ENCODE measurements at regions of chr3 and their contacts with region 1.

Region 1: GRCh38 chr3:188052169-188053030 is 101.6 kb upstream of the LPP start:
- DNase-seq: peak; percentile 98
- H3K4me3 ChIP-seq: no peak overlapping the region
- H3K27ac ChIP-seq: peak overlapping the region; percentile 84 to 89
- H3K4me1 ChIP-seq: peaks cover 36% of the 10 kb centered on the region
- H3K27me3 ChIP-seq: no peaks in the 10 kb centered on the region
- CTCF ChIP-seq: peak; percentile 53 to 83 (median 80)
- POLR2A ChIP-seq: no peak

Region 2: GRCh38 chr3:188954590-188955208 is 902.3 kb after region 1 on chr3:
- intact Hi-C with region 1: loop called (anchors 5 kb)
- DNase-seq: peak; percentile 87
- H3K4me3 ChIP-seq: no peak overlapping the region
- H3K27ac ChIP-seq: peak overlapping the region in 1 of 2 donors; percentile 86
- H3K4me1 ChIP-seq: peaks cover 24% of the 10 kb centered on the region
- H3K27me3 ChIP-seq: no peaks in the 10 kb centered on the region
- CTCF ChIP-seq: peak; percentile 91 to 96 (median 93)
- POLR2A ChIP-seq: no peak

Measured in testis (tissue), 5 donors.